ENCODE measurements at regions of chr4 and their contacts with region 1.

Region 1: DNA sequence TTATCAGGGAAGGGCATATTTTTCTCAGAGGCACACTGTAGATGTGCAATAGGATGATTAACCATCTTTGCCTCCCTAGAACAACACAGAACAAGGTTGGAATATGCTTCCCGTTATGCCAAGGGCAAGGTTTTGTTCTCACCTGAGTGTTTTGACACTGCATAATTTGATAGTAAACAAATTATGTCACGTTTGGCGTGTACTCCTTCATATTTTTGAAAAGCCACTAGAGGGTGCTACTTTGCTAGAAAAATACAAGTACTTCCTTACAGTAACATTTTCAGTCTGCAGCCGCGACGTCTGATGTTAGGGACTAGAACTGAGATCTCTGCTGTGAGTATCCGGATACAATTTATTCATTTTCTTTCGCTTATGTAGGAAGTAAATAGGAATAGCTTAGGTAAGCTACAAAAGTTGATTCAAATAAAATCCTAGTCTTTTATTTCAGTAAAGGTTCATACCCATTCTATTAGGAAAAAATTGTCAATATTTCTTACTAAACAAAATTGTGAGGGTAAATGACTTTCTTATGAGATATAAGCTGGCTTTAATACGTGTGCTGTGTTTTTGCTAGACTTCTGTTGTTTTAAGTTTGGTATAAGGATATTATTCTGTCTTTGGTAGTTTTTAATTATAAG is 181.1 kb upstream of the WDFY3 start:
- DNase-seq: peak; percentile 62
- H3K4me3 ChIP-seq: no peak overlapping the region
- H3K27ac ChIP-seq: no peak overlapping the region
- H3K4me1 ChIP-seq: no peaks in the 10 kb centered on the region
- H3K27me3 ChIP-seq: no peaks in the 10 kb centered on the region
- CTCF ChIP-seq: peak; percentile 54

Region 2: GRCh38 chr4:85298037-85298436 is 150.5 kb after region 1 on chr4:
- CTCF ChIA-PET with region 1: no interaction called
- POLR2A ChIA-PET with region 1: no interaction called
- intact Hi-C with region 1: no loop called
- DNase-seq: no peak
- H3K4me3 ChIP-seq: no peak overlapping the region
- H3K27ac ChIP-seq: no peak overlapping the region
- H3K4me1 ChIP-seq: no peaks in the 10 kb centered on the region
- H3K27me3 ChIP-seq: no peaks in the 10 kb centered on the region
- CTCF ChIP-seq: no peak

Region 3: GRCh38 chr4:85370430-85371032 is 223.0 kb after region 1 on chr4:
- CTCF ChIA-PET with region 1: no interaction called
- POLR2A ChIA-PET with region 1: no interaction called
- intact Hi-C with region 1: loop called (anchors 2 kb)
- DNase-seq: peak; percentile 49
- H3K4me3 ChIP-seq: no peak overlapping the region
- H3K27ac ChIP-seq: no peak overlapping the region
- H3K4me1 ChIP-seq: no peaks in the 10 kb centered on the region
- H3K27me3 ChIP-seq: no peaks in the 10 kb centered on the region
- CTCF ChIP-seq: peak; percentile 67

Region 4: GRCh38 chr4:85968945-85969819 is 821.6 kb after region 1 on chr4:
- CTCF ChIA-PET with region 1: no interaction called
- POLR2A ChIA-PET with region 1: no interaction called
- intact Hi-C with region 1: loop called (anchors 10 kb)
- DNase-seq: peak; percentile 56
- H3K4me3 ChIP-seq: no peak overlapping the region
- H3K27ac ChIP-seq: no peak overlapping the region
- H3K4me1 ChIP-seq: peaks cover 5% of the 10 kb centered on the region
- H3K27me3 ChIP-seq: no peaks in the 10 kb centered on the region
- CTCF ChIP-seq: peak; percentile 52

Measured in A673 (cell line).